B cell (primary cell): ENCODE measurements at regions of chr3 and their contacts with region 1.

Region 1: DNA sequence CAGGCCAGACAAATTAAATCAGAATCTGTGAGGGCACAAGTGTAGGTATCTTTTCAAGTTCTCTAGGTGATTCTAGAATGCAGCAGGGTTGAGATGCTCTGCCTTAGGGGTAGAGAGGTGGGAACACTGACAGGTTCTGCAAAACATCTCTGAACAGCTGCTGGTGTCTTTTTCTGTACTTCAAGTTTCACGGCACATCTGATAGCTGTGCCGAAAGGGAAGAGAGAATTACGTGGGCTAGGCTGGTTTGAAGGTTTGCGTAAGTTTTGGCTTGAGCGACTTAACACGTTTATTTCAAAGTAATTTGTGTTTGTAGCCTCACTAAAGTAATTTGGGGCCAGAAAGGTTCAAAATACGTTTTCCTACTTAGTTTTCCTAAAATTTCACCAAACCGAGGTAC is 22.5 kb downstream of the PXK start:
- DNase-seq: peak; percentile 81
- ATAC-seq: peak; percentile 53
- H3K4me3 ChIP-seq: peak overlapping the region in 4 of 5 experiments; percentile 6 to 81 (median 16)
- H3K4me3 Mint-ChIP-seq: peak overlapping the region; percentile 99
- H3K27ac ChIP-seq: peak overlapping the region; percentile 94 to 97
- H3K27ac Mint-ChIP-seq: peak overlapping the region; percentile 100
- H3K4me1 ChIP-seq: peaks cover 84 to 85% of the 10 kb centered on the region in 2 donors
- H3K4me1 Mint-ChIP-seq: peaks cover 77% of the 10 kb centered on the region
- H3K27me3 ChIP-seq: no peaks in the 10 kb centered on the region
- H3K27me3 Mint-ChIP-seq: no peaks in the 10 kb centered on the region
- CTCF ChIP-seq: no peak

Region 2: DNA sequence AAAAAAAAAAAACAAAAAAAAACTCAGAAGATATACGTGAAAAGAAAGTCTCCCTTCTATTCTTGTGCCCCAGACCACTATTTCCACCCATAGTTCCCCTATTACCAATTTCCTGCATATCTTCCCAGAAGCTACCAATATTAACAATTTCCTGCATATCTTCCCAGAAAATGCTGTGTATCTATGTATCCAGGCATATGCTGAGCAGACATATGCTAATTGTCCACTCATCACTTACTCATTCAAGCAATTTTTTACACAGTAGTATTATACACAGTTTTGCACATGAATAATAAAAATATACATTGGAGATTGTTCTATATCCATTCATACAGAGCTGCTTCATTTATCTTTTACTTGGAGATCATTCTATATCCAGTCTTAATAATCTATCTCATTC is 611.7 kb before region 1 on chr3:
- CTCF ChIA-PET with region 1: no interaction called
- POLR2A ChIA-PET with region 1: no interaction called
- intact Hi-C with region 1: no loop called
- DNase-seq: no peak
- ATAC-seq: no peak
- H3K4me3 ChIP-seq: no peak overlapping the region
- H3K4me3 Mint-ChIP-seq: no peak overlapping the region
- H3K27ac ChIP-seq: no peak overlapping the region
- H3K27ac Mint-ChIP-seq: no peak overlapping the region
- H3K4me1 ChIP-seq: no peaks in the 10 kb centered on the region
- H3K4me1 Mint-ChIP-seq: no peaks in the 10 kb centered on the region
- H3K27me3 ChIP-seq: no peaks in the 10 kb centered on the region
- H3K27me3 Mint-ChIP-seq: no peaks in the 10 kb centered on the region
- CTCF ChIP-seq: no peak

Region 3: GRCh38 chr3:58324391-58325390 is 30.5 kb before region 1 on chr3:
- CTCF ChIA-PET with region 1: interaction called, 8 read pairs
- POLR2A ChIA-PET with region 1: interaction called, 3 read pairs
- intact Hi-C with region 1: loop called (anchors 5 kb)
- DNase-seq: no peak
- ATAC-seq: peak; percentile 39
- H3K4me3 ChIP-seq: no peak overlapping the region
- H3K4me3 Mint-ChIP-seq: peak overlapping the region; percentile 57
- H3K27ac ChIP-seq: peak overlapping the region in 1 of 2 donors; percentile 62
- H3K27ac Mint-ChIP-seq: peak overlapping the region; percentile 74
- H3K4me1 ChIP-seq: peaks cover 21 to 29% of the 10 kb centered on the region in 2 donors
- H3K4me1 Mint-ChIP-seq: peaks cover 38% of the 10 kb centered on the region
- H3K27me3 ChIP-seq: no peaks in the 10 kb centered on the region
- H3K27me3 Mint-ChIP-seq: no peaks in the 10 kb centered on the region
- CTCF ChIP-seq: no peak

Region 4: GRCh38 chr3:58332575-58333188 is 22.5 kb before region 1 on chr3 and contains the start of gene PXK:
- CTCF ChIA-PET with region 1: interaction called, 349 read pairs
- POLR2A ChIA-PET with region 1: interaction called, 182 read pairs
- intact Hi-C with region 1: loop called (anchors 1 kb)
- DNase-seq: peak; percentile 86
- ATAC-seq: peak; percentile 76
- H3K4me3 ChIP-seq: peak within 1 kb of the TSS; percentile 72 to 90 (median 87)
- H3K4me3 Mint-ChIP-seq: peak within 1 kb of the TSS; percentile 100
- H3K27ac ChIP-seq: peak within 1 kb of the TSS; percentile 9 to 75
- H3K27ac Mint-ChIP-seq: peak within 1 kb of the TSS; percentile 100
- H3K4me1 ChIP-seq: peaks cover 34 to 41% of the 10 kb centered on the region in 2 donors
- H3K4me1 Mint-ChIP-seq: peaks cover 50% of the 10 kb centered on the region
- H3K27me3 ChIP-seq: no peaks in the 10 kb centered on the region
- H3K27me3 Mint-ChIP-seq: no peaks in the 10 kb centered on the region
- CTCF ChIP-seq: no peak
- total RNA-seq, gene PXK: 104 and 109 TPM in 2 replicates

Region 5: DNA sequence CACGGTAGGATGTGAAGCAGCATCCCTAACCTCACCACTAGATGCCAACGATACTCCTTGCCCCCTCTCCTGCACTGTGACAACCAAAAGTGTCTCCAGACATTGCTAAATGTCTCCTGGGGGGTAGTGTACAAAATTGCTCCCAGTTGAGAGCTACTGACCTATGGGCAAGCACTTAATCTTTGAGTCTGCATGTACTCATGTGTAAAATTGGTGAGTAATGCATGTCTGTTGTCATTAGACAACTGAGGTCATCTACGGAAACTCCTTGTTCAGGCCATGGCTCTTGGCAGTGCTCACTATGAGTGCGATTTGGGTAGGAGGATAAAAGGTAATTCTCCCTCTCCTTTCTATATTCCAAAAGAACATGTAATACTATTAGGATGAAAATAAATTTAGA is 49.2 kb after region 1 on chr3:
- CTCF ChIA-PET with region 1: interaction called, 12 read pairs
- POLR2A ChIA-PET with region 1: interaction called, 3 read pairs
- intact Hi-C with region 1: loop called (anchors 5 kb)
- DNase-seq: no peak
- ATAC-seq: no peak
- H3K4me3 ChIP-seq: no peak overlapping the region
- H3K4me3 Mint-ChIP-seq: no peak overlapping the region
- H3K27ac ChIP-seq: peak overlapping the region in 1 of 2 donors; percentile 54
- H3K27ac Mint-ChIP-seq: peak overlapping the region; percentile 73
- H3K4me1 ChIP-seq: peaks cover 6 to 25% of the 10 kb centered on the region in 2 donors
- H3K4me1 Mint-ChIP-seq: peaks cover 44% of the 10 kb centered on the region
- H3K27me3 ChIP-seq: no peaks in the 10 kb centered on the region
- H3K27me3 Mint-ChIP-seq: no peaks in the 10 kb centered on the region
- CTCF ChIP-seq: no peak